Caco-2 (cell line): ENCODE measurements at regions of chr7 and their contacts with region 1.

Region 1: GRCh38 chr7:111089822-111090426 is 1.0 kb upstream of the LRRN3 start:
- DNase-seq: peak in 1 of 2 experiments; percentile 26
- H3K4me3 ChIP-seq: no peak overlapping the region
- H3K4me3 Mint-ChIP-seq: no peak overlapping the region
- H3K27ac Mint-ChIP-seq: no peak overlapping the region
- H3K4me1 ChIP-seq: no peaks in the 10 kb centered on the region
- H3K4me1 Mint-ChIP-seq: no peaks in the 10 kb centered on the region
- H3K27me3 ChIP-seq: no peaks in the 10 kb centered on the region
- H3K27me3 Mint-ChIP-seq: no peaks in the 10 kb centered on the region
- CTCF ChIP-seq: peak; percentile 50 to 63

Region 2: DNA sequence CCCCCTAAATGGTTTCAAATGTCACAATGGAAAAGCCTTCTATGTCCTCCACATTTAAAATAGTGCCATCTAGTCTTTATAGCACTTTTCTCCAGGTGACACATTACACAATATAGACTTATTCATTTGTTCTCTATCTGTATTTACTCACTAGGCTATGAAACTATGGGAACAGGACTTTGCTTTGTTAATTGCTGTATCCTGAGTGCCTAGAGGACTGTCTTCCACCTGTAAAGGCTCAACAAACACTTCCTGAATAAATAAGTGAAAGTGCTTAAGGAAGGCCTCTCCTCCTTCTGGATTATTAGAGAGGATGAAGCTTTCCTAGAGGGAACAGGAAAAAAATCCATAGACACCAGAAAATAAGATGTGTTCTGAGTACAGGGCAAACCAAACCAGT is 396.6 kb before region 1 on chr7:
- CTCF ChIA-PET with region 1: no interaction called
- POLR2A ChIA-PET with region 1: no interaction called
- intact Hi-C with region 1: no loop called
- DNase-seq: no peak
- H3K4me3 ChIP-seq: no peak overlapping the region
- H3K4me3 Mint-ChIP-seq: no peak overlapping the region
- H3K27ac Mint-ChIP-seq: no peak overlapping the region
- H3K4me1 ChIP-seq: no peaks in the 10 kb centered on the region
- H3K4me1 Mint-ChIP-seq: peaks cover 7% of the 10 kb centered on the region
- H3K27me3 ChIP-seq: no peaks in the 10 kb centered on the region
- H3K27me3 Mint-ChIP-seq: no peaks in the 10 kb centered on the region
- CTCF ChIP-seq: no peak

Region 3: GRCh38 chr7:111059833-111060232 is 30.1 kb before region 1 on chr7:
- CTCF ChIA-PET with region 1: no interaction called
- POLR2A ChIA-PET with region 1: no interaction called
- intact Hi-C with region 1: no loop called
- DNase-seq: no peak
- H3K4me3 ChIP-seq: no peak overlapping the region
- H3K4me3 Mint-ChIP-seq: no peak overlapping the region
- H3K27ac Mint-ChIP-seq: no peak overlapping the region
- H3K4me1 ChIP-seq: no peaks in the 10 kb centered on the region
- H3K4me1 Mint-ChIP-seq: no peaks in the 10 kb centered on the region
- H3K27me3 ChIP-seq: no peaks in the 10 kb centered on the region
- H3K27me3 Mint-ChIP-seq: no peaks in the 10 kb centered on the region
- CTCF ChIP-seq: no peak

Region 4: DNA sequence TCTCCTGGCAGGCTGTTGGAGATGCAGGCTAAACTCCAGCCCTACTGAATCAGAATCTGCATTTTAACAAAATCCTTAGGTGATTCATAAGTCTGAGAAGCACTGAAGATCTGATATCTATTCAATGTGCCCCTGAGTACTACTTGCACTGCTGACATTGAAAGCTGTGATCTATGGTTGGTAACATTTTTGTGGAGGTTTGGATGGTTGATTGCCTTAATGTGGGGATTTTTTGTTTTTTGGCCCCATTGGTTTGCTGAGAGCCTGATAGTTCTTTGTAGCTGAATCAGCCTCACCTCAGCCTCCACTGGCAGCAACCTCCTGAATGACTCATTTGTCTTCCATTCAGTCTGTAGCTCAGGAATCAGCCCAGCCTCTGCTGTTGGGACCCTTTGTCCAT is 13.7 kb before region 1 on chr7:
- CTCF ChIA-PET with region 1: interaction called, 10 read pairs
- POLR2A ChIA-PET with region 1: no interaction called
- intact Hi-C with region 1: no loop called
- DNase-seq: no peak
- H3K4me3 ChIP-seq: no peak overlapping the region
- H3K4me3 Mint-ChIP-seq: no peak overlapping the region
- H3K27ac Mint-ChIP-seq: no peak overlapping the region
- H3K4me1 ChIP-seq: peaks cover 25% of the 10 kb centered on the region; the same call in 1 of the 2 replicates
- H3K4me1 Mint-ChIP-seq: peaks cover 19% of the 10 kb centered on the region
- H3K27me3 ChIP-seq: no peaks in the 10 kb centered on the region
- H3K27me3 Mint-ChIP-seq: no peaks in the 10 kb centered on the region
- CTCF ChIP-seq: no peak

Region 5: GRCh38 chr7:111168182-111168581 is 78.3 kb after region 1 on chr7:
- CTCF ChIA-PET with region 1: no interaction called
- POLR2A ChIA-PET with region 1: no interaction called
- intact Hi-C with region 1: no loop called
- DNase-seq: no peak
- H3K4me3 ChIP-seq: no peak overlapping the region
- H3K4me3 Mint-ChIP-seq: no peak overlapping the region
- H3K27ac Mint-ChIP-seq: no peak overlapping the region
- H3K4me1 ChIP-seq: 0 out of 2 replicates have a peak, but pooled peaks cover 4% of the 10 kb centered on the region
- H3K4me1 Mint-ChIP-seq: peaks cover 6% of the 10 kb centered on the region
- H3K27me3 ChIP-seq: no peaks in the 10 kb centered on the region
- H3K27me3 Mint-ChIP-seq: no peaks in the 10 kb centered on the region
- CTCF ChIP-seq: no peak

Region 6: DNA sequence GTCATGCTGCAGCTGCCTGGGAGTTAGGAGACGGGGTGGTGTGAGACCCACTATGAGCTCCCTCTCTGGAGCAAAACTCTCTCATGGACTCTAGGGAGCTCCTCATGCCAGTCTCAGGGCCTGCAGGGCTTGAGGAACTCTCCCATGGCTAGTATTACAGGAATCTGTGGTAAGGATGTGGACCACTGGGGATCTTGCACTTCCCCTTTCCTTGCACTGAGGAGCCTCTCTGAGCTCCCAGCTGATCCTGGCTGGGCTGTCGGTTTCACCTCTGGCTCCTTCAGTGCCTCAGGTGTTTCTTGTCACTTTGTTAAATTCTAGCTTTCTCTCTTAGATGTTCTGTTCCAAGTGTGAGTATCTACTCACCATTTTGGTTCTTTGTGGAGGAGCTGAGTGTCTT is 544.0 kb after region 1 on chr7:
- CTCF ChIA-PET with region 1: no interaction called
- POLR2A ChIA-PET with region 1: no interaction called
- intact Hi-C with region 1: no loop called
- DNase-seq: no peak
- H3K4me3 ChIP-seq: no peak overlapping the region
- H3K4me3 Mint-ChIP-seq: no peak overlapping the region
- H3K27ac Mint-ChIP-seq: no peak overlapping the region
- H3K4me1 ChIP-seq: no peaks in the 10 kb centered on the region
- H3K4me1 Mint-ChIP-seq: no peaks in the 10 kb centered on the region
- H3K27me3 ChIP-seq: no peaks in the 10 kb centered on the region
- H3K27me3 Mint-ChIP-seq: peaks cover 2% of the 10 kb centered on the region
- CTCF ChIP-seq: no peak

Region 7: GRCh38 chr7:111730476-111731300 is 640.8 kb after region 1 on chr7:
- CTCF ChIA-PET with region 1: no interaction called
- POLR2A ChIA-PET with region 1: no interaction called
- intact Hi-C with region 1: loop called (anchors 1 kb)
- DNase-seq: peak in 1 of 2 experiments; percentile 26
- H3K4me3 ChIP-seq: no peak overlapping the region
- H3K4me3 Mint-ChIP-seq: no peak overlapping the region
- H3K27ac Mint-ChIP-seq: no peak overlapping the region
- H3K4me1 ChIP-seq: no peaks in the 10 kb centered on the region
- H3K4me1 Mint-ChIP-seq: no peaks in the 10 kb centered on the region
- H3K27me3 ChIP-seq: no peaks in the 10 kb centered on the region
- H3K27me3 Mint-ChIP-seq: no peaks in the 10 kb centered on the region
- CTCF ChIP-seq: peak; percentile 17 to 47